ENCODE measurements at regions of chr7 and their contacts with region 1.

Region 1: DNA sequence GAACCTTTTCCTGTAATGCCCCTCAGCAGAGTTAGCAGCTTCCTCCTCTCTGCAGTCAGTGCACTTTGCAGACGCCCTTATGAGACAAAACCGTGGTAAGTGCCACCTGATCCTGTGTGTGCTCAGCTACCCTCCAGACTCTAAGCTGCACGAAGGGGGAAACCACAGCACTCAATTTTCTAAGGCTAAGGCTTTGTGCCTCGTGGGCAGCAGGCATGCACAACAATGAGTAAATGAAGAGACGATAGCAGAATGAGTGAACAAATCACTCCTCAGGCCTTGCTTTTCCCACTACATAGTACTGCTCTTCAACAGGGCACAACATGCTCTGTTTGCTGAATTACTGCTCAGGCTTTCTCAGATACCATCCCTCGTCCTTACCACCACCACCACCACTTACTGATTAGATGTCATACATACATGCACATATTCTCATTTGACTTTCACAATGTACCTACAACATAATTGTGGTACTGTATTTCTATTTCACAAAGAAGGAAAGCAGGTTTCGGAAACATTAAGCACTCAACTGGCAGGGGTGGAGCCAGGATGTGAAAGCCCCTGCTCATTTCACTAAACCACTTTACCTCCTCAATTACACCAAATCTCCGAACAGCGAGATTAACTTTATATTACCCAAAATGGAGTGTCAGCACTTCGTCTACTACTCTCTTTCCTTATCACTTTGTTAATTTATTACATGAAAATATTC is 85.4 kb downstream of the ICA1 start:
- DNase-seq: peak; percentile 75
- H3K4me3 Mint-ChIP-seq: peak overlapping the region; percentile 67
- H3K27ac Mint-ChIP-seq: peak overlapping the region; percentile 93
- H3K4me1 Mint-ChIP-seq: peaks cover 49% of the 10 kb centered on the region
- H3K27me3 Mint-ChIP-seq: no peaks in the 10 kb centered on the region

Region 2: GRCh38 chr7:7640221-7641128 is 536.1 kb before region 1 on chr7 and contains the start of gene UMAD1:
- CTCF ChIA-PET with region 1: no interaction called
- POLR2A ChIA-PET with region 1: interaction called, 3 read pairs
- intact Hi-C with region 1: loop called (anchors 1 kb)
- DNase-seq: peak; percentile 99
- H3K4me3 Mint-ChIP-seq: peak within 1 kb of the TSS; percentile 97
- H3K27ac Mint-ChIP-seq: peak within 1 kb of the TSS; percentile 100
- H3K4me1 Mint-ChIP-seq: peaks cover 45% of the 10 kb centered on the region
- H3K27me3 Mint-ChIP-seq: peaks cover 1% of the 10 kb centered on the region
- total RNA-seq, gene UMAD1: 15.0 to 17.6 TPM

Region 3: GRCh38 chr7:7772397-7772821 is 404.1 kb before region 1 on chr7:
- CTCF ChIA-PET with region 1: no interaction called
- POLR2A ChIA-PET with region 1: no interaction called
- intact Hi-C with region 1: loop called (anchors 1 kb)
- DNase-seq: peak; percentile 41
- H3K4me3 Mint-ChIP-seq: no peak overlapping the region
- H3K27ac Mint-ChIP-seq: no peak overlapping the region
- H3K4me1 Mint-ChIP-seq: peaks cover 19% of the 10 kb centered on the region
- H3K27me3 Mint-ChIP-seq: no peaks in the 10 kb centered on the region

Region 4: DNA sequence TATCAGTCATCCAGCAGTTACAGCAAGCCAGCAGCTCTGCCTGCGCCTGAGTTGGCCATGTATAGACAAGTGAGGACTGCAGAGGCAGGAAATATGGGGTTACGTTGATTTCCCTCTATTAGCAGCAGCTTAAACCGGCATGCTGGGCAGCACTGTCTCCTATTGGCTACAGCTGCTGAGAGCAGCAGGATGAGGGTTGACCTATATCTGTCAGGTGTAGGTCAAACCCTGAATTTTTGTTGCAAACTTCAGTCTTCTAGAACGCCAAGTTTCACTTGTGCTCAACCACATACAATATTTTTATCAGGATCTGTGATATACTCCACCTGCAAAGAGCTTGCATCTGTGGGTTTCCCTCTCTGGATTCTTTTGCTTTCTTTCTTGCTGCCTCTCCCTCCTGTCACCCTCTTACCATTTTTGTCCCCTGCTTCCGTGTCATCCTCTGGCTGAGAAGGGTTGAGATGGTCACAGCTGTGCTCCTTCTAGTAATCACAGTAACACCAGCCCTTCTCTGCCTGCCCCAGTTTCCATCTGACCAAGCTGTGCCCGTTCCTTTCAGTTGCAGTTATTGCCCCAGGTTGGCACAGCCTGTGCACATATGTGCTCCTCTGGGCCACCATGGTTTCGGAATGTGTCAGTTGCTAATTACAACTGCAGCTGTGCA is 231.8 kb before region 1 on chr7:
- CTCF ChIA-PET with region 1: no interaction called
- POLR2A ChIA-PET with region 1: no interaction called
- intact Hi-C with region 1: loop called (anchors 1 kb)
- DNase-seq: peak; percentile 84
- H3K4me3 Mint-ChIP-seq: peak overlapping the region; percentile 71
- H3K27ac Mint-ChIP-seq: peak overlapping the region; percentile 89
- H3K4me1 Mint-ChIP-seq: peaks cover 26% of the 10 kb centered on the region
- H3K27me3 Mint-ChIP-seq: no peaks in the 10 kb centered on the region

Region 5: GRCh38 chr7:8125680-8126444 is 50.7 kb before region 1 on chr7:
- CTCF ChIA-PET with region 1: interaction called, 9 read pairs
- POLR2A ChIA-PET with region 1: interaction called, 3 read pairs
- intact Hi-C with region 1: loop called (anchors 1 kb)
- DNase-seq: peak; percentile 89
- H3K4me3 Mint-ChIP-seq: peak overlapping the region; percentile 66
- H3K27ac Mint-ChIP-seq: peak overlapping the region; percentile 92
- H3K4me1 Mint-ChIP-seq: peaks cover 78% of the 10 kb centered on the region
- H3K27me3 Mint-ChIP-seq: no peaks in the 10 kb centered on the region

Region 6: DNA sequence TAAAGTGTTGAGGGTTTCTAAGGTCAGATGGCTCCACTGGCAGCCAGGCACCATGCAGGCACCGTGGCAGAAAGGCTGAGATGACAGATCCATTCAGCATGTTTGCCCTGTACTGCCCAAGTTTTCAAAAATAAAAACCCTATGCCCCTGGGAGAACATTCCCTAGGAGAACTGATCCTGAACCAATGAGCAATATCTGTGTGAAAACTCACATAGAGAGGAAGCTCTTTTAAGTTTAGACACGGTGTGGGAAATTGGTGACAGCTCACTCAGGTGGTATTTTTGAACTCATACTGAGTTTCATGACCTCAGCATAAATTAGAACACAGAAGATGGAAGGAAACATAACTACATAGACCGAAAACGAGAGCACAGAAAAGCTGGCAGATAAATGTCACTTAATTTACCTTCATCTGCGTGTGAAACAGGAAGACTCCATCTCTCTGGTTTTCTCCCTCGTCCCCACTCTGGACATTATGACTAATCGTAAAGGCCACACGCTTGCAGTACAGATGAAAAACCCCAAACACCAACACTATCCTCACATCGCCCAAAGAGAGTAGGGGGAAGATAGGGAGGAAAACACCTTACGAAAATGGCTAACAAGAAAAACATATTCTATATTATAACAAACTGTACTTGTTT is 42.3 kb before region 1 on chr7:
- CTCF ChIA-PET with region 1: interaction called, 4 read pairs
- POLR2A ChIA-PET with region 1: no interaction called
- intact Hi-C with region 1: loop called (anchors 1 kb)
- DNase-seq: peak; percentile 66
- H3K4me3 Mint-ChIP-seq: peak overlapping the region; percentile 35
- H3K27ac Mint-ChIP-seq: peak overlapping the region; percentile 71
- H3K4me1 Mint-ChIP-seq: peaks cover 60% of the 10 kb centered on the region
- H3K27me3 Mint-ChIP-seq: no peaks in the 10 kb centered on the region

Region 7: DNA sequence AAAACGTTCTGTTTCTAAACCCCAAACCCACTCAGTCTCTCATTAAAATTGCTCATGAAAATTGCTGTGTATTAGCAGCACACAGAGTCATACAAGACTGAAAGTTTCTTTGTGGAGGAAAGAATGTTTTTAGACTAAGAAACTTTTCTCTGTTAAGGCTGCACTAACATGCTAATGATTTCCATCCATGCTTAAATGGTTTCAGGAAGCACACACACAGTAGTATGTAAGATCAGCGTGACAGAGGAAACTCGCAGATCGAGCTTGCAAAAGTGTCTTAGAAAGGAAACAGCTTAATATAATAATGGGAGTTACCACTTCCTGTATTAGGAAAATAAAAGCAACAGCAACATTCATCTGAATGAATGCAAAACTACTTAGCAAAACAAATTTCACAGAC is 27.3 kb before region 1 on chr7:
- CTCF ChIA-PET with region 1: no interaction called
- POLR2A ChIA-PET with region 1: no interaction called
- intact Hi-C with region 1: loop called (anchors 1 kb)
- DNase-seq: no peak
- H3K4me3 Mint-ChIP-seq: peak overlapping the region; percentile 39
- H3K27ac Mint-ChIP-seq: peak overlapping the region; percentile 30
- H3K4me1 Mint-ChIP-seq: peaks cover 42% of the 10 kb centered on the region
- H3K27me3 Mint-ChIP-seq: no peaks in the 10 kb centered on the region

Measured in activated CD4-positive, alpha-beta memory T cell treated with anti-CD3 and anti-CD28 coated beads for 36 hours (primary cell).